ENCODE measurements at regions of chr11 and their contacts with region 1.

Region 1: DNA sequence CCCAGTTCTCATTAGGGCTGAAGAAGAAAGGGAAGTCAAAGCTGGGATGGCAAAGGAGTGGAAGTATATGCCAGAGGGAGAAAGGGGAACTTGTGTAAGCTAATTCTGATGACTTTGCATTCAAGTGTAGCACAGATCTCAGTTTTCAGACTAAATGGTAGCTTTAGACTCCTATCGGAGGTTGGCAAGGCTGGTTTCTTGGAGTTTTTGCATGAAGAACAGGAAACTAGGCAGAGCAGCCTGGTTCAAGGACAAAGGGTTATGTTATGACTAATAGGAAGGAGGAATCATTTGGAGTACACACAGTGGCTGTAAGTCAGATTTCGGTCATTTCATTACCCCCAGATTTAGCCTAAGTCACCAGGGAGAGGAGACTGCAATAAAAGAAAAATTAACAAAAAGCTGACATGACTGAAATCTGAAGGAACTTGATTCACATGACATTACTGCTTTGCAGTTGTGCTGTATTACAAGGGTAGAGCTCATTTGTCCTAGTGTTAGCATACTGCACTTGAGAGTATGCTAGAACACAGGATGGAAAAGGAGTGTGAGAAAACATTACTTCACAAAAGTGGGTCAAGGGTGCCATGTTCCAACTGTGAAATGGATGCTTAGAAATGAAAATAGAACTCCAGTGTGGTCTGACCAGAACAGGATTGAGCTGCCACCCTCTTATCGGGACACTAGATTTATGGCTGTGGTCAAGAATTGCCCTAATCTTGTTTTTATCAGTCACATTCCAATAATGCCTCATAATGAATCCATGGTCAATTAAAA is 23.6 kb downstream of the ADM start:
- DNase-seq: no peak
- ATAC-seq: no peak
- H3K4me3 ChIP-seq: no peak overlapping the region
- H3K27ac ChIP-seq: peak overlapping the region; percentile 90
- H3K4me1 ChIP-seq: peaks cover 59% of the 10 kb centered on the region
- H3K27me3 ChIP-seq: no peaks in the 10 kb centered on the region
- CTCF ChIP-seq: no peak
- EP300 ChIP-seq: no peak
- POLR2A ChIP-seq: no peak
- RAD21 ChIP-seq: no peak

Region 2: DNA sequence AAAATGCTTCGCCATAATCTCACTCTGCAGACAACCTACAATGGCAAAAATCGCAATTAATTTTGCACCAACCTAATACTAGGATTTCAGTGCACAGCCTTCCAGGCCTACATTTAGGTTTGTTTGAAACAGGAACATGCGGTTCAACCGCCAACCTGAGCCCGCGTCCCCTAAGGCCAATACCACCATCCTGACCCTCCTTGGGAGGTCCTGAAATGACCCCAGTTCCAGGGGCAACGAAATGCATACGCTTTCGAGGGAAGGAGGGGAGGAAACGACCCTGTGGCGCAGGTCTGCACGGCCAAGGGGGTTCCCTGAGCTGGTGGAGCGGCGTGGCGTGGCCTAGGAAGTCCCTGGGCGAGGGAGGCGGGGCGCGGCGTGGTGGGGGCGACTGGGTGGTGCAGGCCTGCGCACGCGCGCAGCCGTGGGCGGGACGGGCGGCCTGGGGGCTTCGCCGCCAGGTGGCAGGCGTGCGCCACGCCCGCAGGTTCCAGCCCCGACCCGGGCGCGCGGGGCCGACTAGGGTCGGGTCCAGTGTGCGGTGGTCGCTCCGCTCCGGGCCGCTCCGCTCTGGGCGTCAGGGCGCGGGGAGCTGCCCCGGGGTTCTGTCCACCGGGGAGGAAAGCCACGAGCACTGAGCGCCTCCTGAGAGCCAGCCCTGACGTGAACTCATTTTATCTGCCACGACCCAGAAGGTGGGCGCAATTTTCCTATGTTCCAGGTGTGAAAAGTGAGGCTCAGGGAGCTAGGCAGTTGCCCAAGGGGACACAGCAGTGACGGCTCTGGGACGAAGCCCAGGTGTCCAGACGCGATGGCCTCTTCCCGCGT is 570.5 kb before region 1 on chr11:
- CTCF ChIA-PET with region 1: no interaction called
- POLR2A ChIA-PET with region 1: interaction called, 15 read pairs
- in situ Hi-C with region 1: loop called (anchors 10 kb)
- intact Hi-C with region 1: no loop called
- DNase-seq: peak; percentile 63
- ATAC-seq: peak; percentile 84
- H3K4me3 ChIP-seq: peak overlapping the region; percentile 63 to 87 (median 77)
- H3K27ac ChIP-seq: peak overlapping the region; percentile 90
- H3K4me1 ChIP-seq: peaks cover 57% of the 10 kb centered on the region
- H3K27me3 ChIP-seq: no peaks in the 10 kb centered on the region; a peak in 1 of 5 replicates
- CTCF ChIP-seq: peak; percentile 71; the same call in 1 of the 2 replicates
- EP300 ChIP-seq: no peak
- POLR2A ChIP-seq: peak; percentile 19 to 89; a peak in 3 of 4 replicates
- RAD21 ChIP-seq: peak; percentile 98

Region 3: DNA sequence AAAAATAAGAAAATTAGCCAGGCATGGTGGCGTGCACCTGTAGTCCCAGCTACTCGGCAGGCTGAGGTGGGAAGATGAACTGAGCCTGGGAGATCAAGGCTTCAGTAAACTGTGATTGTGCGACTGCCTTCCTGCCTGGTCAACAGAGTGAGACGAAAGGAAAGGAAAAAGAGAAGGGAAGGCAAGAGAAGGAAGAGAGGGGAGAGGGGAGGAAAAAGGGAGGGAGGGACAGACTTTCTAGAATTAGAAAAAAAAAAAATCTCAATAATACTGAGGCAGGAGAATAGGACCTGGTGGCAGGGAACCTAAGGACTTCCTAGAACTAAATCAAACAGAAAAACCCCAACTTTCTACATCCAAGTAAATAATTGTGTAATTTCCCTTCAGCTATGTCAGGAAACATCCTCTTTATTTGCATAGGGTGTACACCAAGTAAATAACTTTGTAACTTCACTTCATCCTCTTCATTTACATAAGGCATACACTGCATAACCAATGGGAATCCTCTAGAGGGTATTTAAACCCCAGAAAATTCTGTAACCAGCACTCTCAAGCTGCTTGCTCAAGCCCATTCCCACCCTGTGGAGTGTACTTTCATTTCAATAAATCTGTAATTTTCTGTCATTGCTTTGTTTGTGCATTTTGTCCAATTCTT is 43.2 kb before region 1 on chr11:
- CTCF ChIA-PET with region 1: no interaction called
- POLR2A ChIA-PET with region 1: interaction called, 11 read pairs
- in situ Hi-C with region 1: no loop called
- intact Hi-C with region 1: no loop called
- DNase-seq: peak; percentile 87
- ATAC-seq: peak; percentile 30
- H3K4me3 ChIP-seq: peak overlapping the region in 1 of 3 experiments; percentile 28; a peak in 2 of 6 replicates
- H3K27ac ChIP-seq: peak overlapping the region; percentile 62
- H3K4me1 ChIP-seq: peaks cover 81% of the 10 kb centered on the region
- H3K27me3 ChIP-seq: no peaks in the 10 kb centered on the region
- CTCF ChIP-seq: no peak
- EP300 ChIP-seq: peak; percentile 51 to 79; a peak in 2 of 4 replicates
- POLR2A ChIP-seq: peak; percentile 58 to 85
- RAD21 ChIP-seq: no peak

Region 4: GRCh38 chr11:10314199-10315072 is 14.1 kb before region 1 on chr11:
- CTCF ChIA-PET with region 1: interaction called, 16 read pairs
- POLR2A ChIA-PET with region 1: interaction called, 14 read pairs
- in situ Hi-C with region 1: no loop called
- intact Hi-C with region 1: loop called (anchors 2 kb)
- DNase-seq: peak; percentile 63
- ATAC-seq: peak; percentile 91
- H3K4me3 ChIP-seq: peak overlapping the region in 1 of 3 experiments; percentile 41; a peak in 1 of 6 replicates
- H3K27ac ChIP-seq: no peak overlapping the region
- H3K4me1 ChIP-seq: peaks cover 48% of the 10 kb centered on the region
- H3K27me3 ChIP-seq: no peaks in the 10 kb centered on the region
- CTCF ChIP-seq: no peak
- EP300 ChIP-seq: no peak
- POLR2A ChIP-seq: no peak
- RAD21 ChIP-seq: no peak

Region 5: GRCh38 chr11:10351768-10352641 is 23.5 kb after region 1 on chr11:
- CTCF ChIA-PET with region 1: no interaction called
- POLR2A ChIA-PET with region 1: interaction called, 47 read pairs
- in situ Hi-C with region 1: no loop called
- intact Hi-C with region 1: loop called (anchors 2 kb)
- DNase-seq: peak; percentile 89
- ATAC-seq: peak; percentile 93
- H3K4me3 ChIP-seq: peak overlapping the region; percentile 51 to 62 (median 52); a peak in 5 of 6 replicates
- H3K27ac ChIP-seq: peak overlapping the region; percentile 59
- H3K4me1 ChIP-seq: peaks cover 48% of the 10 kb centered on the region
- H3K27me3 ChIP-seq: no peaks in the 10 kb centered on the region
- CTCF ChIP-seq: no peak
- EP300 ChIP-seq: 0 out of 4 replicates have a peak, but pooled peaks of 1 of the 2 experiments have one; percentile 4
- POLR2A ChIP-seq: no peak
- RAD21 ChIP-seq: no peak

Region 6: GRCh38 chr11:10366568-10367370 is 38.3 kb after region 1 on chr11:
- CTCF ChIA-PET with region 1: interaction called, 6 read pairs
- POLR2A ChIA-PET with region 1: interaction called, 28 read pairs
- in situ Hi-C with region 1: no loop called
- intact Hi-C with region 1: loop called (anchors 1 kb)
- DNase-seq: peak; percentile 67
- ATAC-seq: peak; percentile 94
- H3K4me3 ChIP-seq: peak overlapping the region in 2 of 3 experiments; percentile 21 to 45; a peak in 2 of 6 replicates
- H3K27ac ChIP-seq: no peak overlapping the region
- H3K4me1 ChIP-seq: peaks cover 15% of the 10 kb centered on the region
- H3K27me3 ChIP-seq: no peaks in the 10 kb centered on the region
- CTCF ChIP-seq: peak; percentile 97
- EP300 ChIP-seq: no peak
- POLR2A ChIP-seq: no peak
- RAD21 ChIP-seq: peak; percentile 87

Region 7: GRCh38 chr11:10838083-10838482 is 509.6 kb after region 1 on chr11:
- CTCF ChIA-PET with region 1: no interaction called
- POLR2A ChIA-PET with region 1: no interaction called
- in situ Hi-C with region 1: no loop called
- intact Hi-C with region 1: no loop called
- DNase-seq: no peak
- ATAC-seq: no peak
- H3K4me3 ChIP-seq: no peak overlapping the region
- H3K27ac ChIP-seq: no peak overlapping the region
- H3K4me1 ChIP-seq: no peaks in the 10 kb centered on the region
- H3K27me3 ChIP-seq: no peaks in the 10 kb centered on the region
- CTCF ChIP-seq: no peak
- EP300 ChIP-seq: no peak
- POLR2A ChIP-seq: no peak
- RAD21 ChIP-seq: no peak